ENCODE measurements at regions of chr1 and their contacts with region 1.

Region 1: DNA sequence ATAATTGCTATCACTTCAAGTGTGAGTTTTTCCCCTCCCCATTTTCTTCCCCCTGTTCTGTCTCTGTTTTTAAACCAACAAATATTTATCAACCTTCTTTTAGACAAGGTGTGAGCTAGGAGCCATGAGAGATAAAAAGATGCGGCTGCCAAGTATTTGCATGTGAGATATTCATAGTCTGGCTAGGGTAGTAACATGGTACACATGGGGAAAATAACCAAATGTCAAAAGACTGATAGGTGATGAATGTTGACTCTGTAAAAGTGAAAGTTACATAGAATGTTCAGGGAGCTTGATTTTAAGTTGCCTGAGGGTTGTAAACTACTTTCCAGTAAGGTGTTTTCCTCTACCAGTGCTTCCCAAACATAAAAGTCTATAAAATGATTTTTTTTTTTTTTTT is 25.4 kb upstream of the SRP9 start:
- DNase-seq: no peak
- H3K4me3 Mint-ChIP-seq: no peak overlapping the region
- H3K27ac Mint-ChIP-seq: no peak overlapping the region
- H3K4me1 Mint-ChIP-seq: peaks cover 7% of the 10 kb centered on the region
- H3K27me3 Mint-ChIP-seq: no peaks in the 10 kb centered on the region

Region 2: GRCh38 chr1:225794954-225795353 is 42.7 kb after region 1 on chr1:
- CTCF ChIA-PET with region 1: no interaction called
- POLR2A ChIA-PET with region 1: interaction called, 11 read pairs
- DNase-seq: no peak
- H3K4me3 Mint-ChIP-seq: no peak overlapping the region
- H3K27ac Mint-ChIP-seq: no peak overlapping the region
- H3K4me1 Mint-ChIP-seq: no peaks in the 10 kb centered on the region
- H3K27me3 Mint-ChIP-seq: no peaks in the 10 kb centered on the region